IMR-90 (cell line): ENCODE measurements at regions of chr2 and their contacts with region 1.

Region 1: DNA sequence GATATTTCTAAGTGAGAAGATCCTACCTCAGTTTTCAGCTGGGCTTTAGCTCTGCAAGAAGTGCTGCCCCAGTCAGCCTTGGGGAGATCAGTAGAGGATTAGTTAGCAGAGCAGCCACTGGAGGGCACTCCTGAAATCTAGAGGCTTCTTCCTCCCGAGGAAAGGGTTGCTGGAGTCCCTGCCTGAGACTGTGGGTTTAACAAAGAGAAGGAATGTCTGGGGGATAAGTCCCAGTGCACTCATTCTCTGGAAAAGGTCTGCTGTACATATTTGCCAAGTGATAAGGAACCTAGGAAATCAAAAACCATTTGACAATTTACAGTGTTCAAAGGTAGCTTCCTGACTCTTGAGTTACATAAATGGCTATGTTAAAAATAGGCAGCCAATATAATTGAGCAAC is 207.2 kb downstream of the SLC8A1 start:
- DNase-seq: peak; percentile 75
- ATAC-seq: peak; percentile 59
- H3K4me3 ChIP-seq: no peak overlapping the region
- H3K27ac ChIP-seq: no peak overlapping the region
- H3K4me1 ChIP-seq: peaks cover 31% of the 10 kb centered on the region
- H3K27me3 ChIP-seq: no peaks in the 10 kb centered on the region
- CTCF ChIP-seq: peak; percentile 61
- POLR2A ChIP-seq: 0 out of 2 replicates have a peak, but pooled peaks have one; percentile 26
- RAD21 ChIP-seq: peak; percentile 67

Region 2: GRCh38 chr2:40041422-40042382 is 203.0 kb before region 1 on chr2:
- CTCF ChIA-PET with region 1: no interaction called
- POLR2A ChIA-PET with region 1: no interaction called
- dilution Hi-C with region 1: no loop called
- in situ Hi-C with region 1: no loop called
- intact Hi-C with region 1: loop called (anchors 5 kb)
- DNase-seq: peak; percentile 94
- ATAC-seq: peak; percentile 45
- H3K4me3 ChIP-seq: no peak overlapping the region
- H3K27ac ChIP-seq: peak overlapping the region; percentile 87
- H3K4me1 ChIP-seq: peaks cover 26% of the 10 kb centered on the region
- H3K27me3 ChIP-seq: no peaks in the 10 kb centered on the region
- CTCF ChIP-seq: no peak
- POLR2A ChIP-seq: no peak
- RAD21 ChIP-seq: peak; percentile 5; the same call in 1 of the 2 replicates

Region 3: DNA sequence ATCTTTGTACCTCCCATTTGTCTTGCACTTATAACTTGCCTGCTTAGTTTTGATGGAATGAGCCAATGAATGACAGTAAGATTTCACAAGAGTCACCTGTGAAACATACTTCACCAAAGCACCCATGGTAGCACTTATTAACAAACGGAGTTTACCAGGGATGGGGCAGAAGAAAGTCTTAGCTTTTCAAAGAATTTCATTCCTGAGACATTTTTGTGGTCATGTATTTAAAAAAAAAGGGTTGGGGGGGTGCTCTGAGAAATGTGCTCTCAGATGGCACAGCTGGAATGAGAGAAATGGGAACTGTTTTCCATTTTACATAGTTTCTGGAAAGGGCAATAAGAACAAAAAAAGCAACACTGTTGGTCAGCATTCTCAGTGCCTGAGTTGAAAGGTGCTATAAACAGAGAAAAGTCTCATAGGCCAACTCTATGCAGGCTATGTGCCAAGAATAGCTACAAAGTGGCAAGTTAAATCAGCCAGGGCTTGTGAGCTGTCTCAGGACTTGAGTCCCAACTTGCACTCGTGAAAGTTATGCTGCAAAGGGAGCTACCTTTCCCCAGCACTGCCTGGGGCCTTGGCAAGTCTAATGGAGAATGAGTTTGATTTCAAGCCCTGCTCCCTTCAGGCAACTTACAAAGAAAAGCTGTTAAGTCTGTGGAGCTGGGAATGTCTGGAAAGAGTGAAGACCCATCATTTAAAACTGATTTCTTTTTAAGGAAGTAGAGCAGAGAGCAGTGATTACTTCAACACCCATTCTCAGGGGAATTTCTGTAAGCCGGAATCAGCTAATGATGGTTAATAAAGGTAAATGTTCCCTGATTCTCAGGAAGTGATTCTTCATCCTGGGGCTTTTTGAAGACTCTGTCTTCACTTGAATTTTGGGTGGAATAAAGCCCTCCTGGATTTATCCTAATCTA is 36.6 kb after region 1 on chr2:
- CTCF ChIA-PET with region 1: interaction called, 3 read pairs
- POLR2A ChIA-PET with region 1: no interaction called
- dilution Hi-C with region 1: no loop called
- in situ Hi-C with region 1: no loop called
- intact Hi-C with region 1: loop called (anchors 1 kb)
- DNase-seq: peak; percentile 89
- ATAC-seq: peak; percentile 74
- H3K4me3 ChIP-seq: no peak overlapping the region
- H3K27ac ChIP-seq: peak overlapping the region; percentile 37
- H3K4me1 ChIP-seq: peaks cover 17% of the 10 kb centered on the region
- H3K27me3 ChIP-seq: no peaks in the 10 kb centered on the region
- CTCF ChIP-seq: no peak
- POLR2A ChIP-seq: no peak; the same call in 1 of the 2 replicates
- RAD21 ChIP-seq: no peak

Region 4: GRCh38 chr2:40448468-40449079 is 203.9 kb after region 1 on chr2:
- CTCF ChIA-PET with region 1: interaction called, 6 read pairs
- POLR2A ChIA-PET with region 1: no interaction called
- dilution Hi-C with region 1: no loop called
- in situ Hi-C with region 1: no loop called
- intact Hi-C with region 1: loop called (anchors 1 kb)
- DNase-seq: peak; percentile 52
- ATAC-seq: no peak
- H3K4me3 ChIP-seq: no peak overlapping the region
- H3K27ac ChIP-seq: no peak overlapping the region
- H3K4me1 ChIP-seq: peaks cover 6% of the 10 kb centered on the region
- H3K27me3 ChIP-seq: no peaks in the 10 kb centered on the region
- CTCF ChIP-seq: peak; percentile 51
- POLR2A ChIP-seq: no peak
- RAD21 ChIP-seq: peak; percentile 44

Region 5: DNA sequence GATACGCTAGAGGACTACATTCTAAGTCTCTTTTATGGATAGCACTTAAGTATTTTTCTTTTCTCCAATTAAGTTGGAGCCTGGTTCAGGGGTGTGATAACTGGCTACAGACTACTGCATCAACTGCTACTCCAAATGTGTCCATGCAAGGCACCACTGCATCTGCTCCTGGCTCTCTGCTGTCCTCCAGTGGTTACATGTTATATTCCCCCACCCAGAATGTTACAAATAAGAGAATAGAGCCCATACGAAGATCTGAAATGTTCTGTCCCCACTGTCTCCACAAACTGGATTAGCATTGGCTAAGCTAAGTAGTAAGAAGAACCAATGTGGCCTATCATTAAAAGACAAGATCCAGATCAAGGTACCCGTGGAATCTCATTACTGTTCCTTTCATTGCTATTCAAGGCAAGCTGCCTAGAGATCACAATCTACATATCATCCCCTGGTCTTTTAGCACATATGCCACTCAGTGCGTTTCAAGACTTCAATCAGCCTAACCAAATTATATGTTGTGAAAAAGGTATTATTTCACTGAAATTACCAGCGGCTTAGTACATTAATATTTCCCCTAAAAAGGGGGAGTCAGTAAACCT is 515.5 kb after region 1 on chr2:
- CTCF ChIA-PET with region 1: interaction called, 3 read pairs
- POLR2A ChIA-PET with region 1: no interaction called
- dilution Hi-C with region 1: no loop called
- in situ Hi-C with region 1: no loop called
- intact Hi-C with region 1: loop called (anchors 2 kb)
- DNase-seq: peak; percentile 69
- ATAC-seq: peak; percentile 99
- H3K4me3 ChIP-seq: no peak overlapping the region
- H3K27ac ChIP-seq: no peak overlapping the region
- H3K4me1 ChIP-seq: no peaks in the 10 kb centered on the region
- H3K27me3 ChIP-seq: no peaks in the 10 kb centered on the region
- CTCF ChIP-seq: peak; percentile 97
- POLR2A ChIP-seq: no peak
- RAD21 ChIP-seq: peak; percentile 98